Panc1 (cell line): ENCODE measurements at regions of chr22 and their contacts with region 1.

Region 1: GRCh38 chr22:29798801-29799680 is 31.9 kb downstream of the UQCR10 start:
- DNase-seq: no peak
- ATAC-seq: 0 out of 2 replicates have a peak, but pooled peaks have one; percentile 48
- H3K4me3 ChIP-seq: no peak overlapping the region
- H3K27ac ChIP-seq: no peak overlapping the region
- H3K4me1 ChIP-seq: no peaks in the 10 kb centered on the region
- H3K27me3 ChIP-seq: no peaks in the 10 kb centered on the region
- CTCF ChIP-seq: no peak

Region 2: GRCh38 chr22:29810216-29810615 is 11.2 kb after region 1 on chr22:
- CTCF ChIA-PET with region 1: no interaction called
- POLR2A ChIA-PET with region 1: no interaction called
- in situ Hi-C with region 1: no loop called
- intact Hi-C with region 1: no loop called
- DNase-seq: no peak
- ATAC-seq: no peak
- H3K4me3 ChIP-seq: no peak overlapping the region
- H3K27ac ChIP-seq: no peak overlapping the region
- H3K4me1 ChIP-seq: no peaks in the 10 kb centered on the region
- H3K27me3 ChIP-seq: no peaks in the 10 kb centered on the region
- CTCF ChIP-seq: no peak

Region 3: DNA sequence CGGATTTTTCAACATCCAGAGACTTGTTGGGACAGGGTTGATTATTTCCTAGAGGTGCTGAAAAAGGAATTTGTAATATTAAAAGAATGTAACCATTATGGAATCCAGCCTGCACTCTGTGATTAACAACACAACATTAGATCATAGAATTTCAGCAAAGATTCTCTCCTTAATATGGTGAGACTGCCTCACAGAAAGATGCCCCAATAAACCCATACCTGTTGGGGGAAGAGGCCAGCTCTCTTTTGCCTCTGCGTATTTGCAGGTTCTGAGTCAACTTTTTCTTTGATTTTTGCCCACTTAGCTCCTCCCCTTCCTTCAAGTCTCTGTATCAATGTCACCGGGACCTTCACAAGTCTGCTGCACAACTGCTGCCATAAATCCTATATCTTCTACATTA is 71.5 kb after region 1 on chr22:
- CTCF ChIA-PET with region 1: no interaction called
- POLR2A ChIA-PET with region 1: no interaction called
- in situ Hi-C with region 1: no loop called
- intact Hi-C with region 1: no loop called
- DNase-seq: no peak
- ATAC-seq: no peak
- H3K4me3 ChIP-seq: no peak overlapping the region
- H3K27ac ChIP-seq: no peak overlapping the region
- H3K4me1 ChIP-seq: no peaks in the 10 kb centered on the region
- H3K27me3 ChIP-seq: no peaks in the 10 kb centered on the region
- CTCF ChIP-seq: no peak

Region 4: GRCh38 chr22:29951791-29952413 is 152.9 kb after region 1 on chr22:
- CTCF ChIA-PET with region 1: no interaction called
- POLR2A ChIA-PET with region 1: interaction called, 14 read pairs
- in situ Hi-C with region 1: no loop called
- intact Hi-C with region 1: no loop called
- DNase-seq: no peak
- ATAC-seq: no peak
- H3K4me3 ChIP-seq: no peak overlapping the region
- H3K27ac ChIP-seq: no peak overlapping the region
- H3K4me1 ChIP-seq: peaks cover 10% of the 10 kb centered on the region
- H3K27me3 ChIP-seq: no peaks in the 10 kb centered on the region
- CTCF ChIP-seq: no peak

Region 5: GRCh38 chr22:30005213-30005857 is 206.3 kb after region 1 on chr22:
- CTCF ChIA-PET with region 1: no interaction called
- POLR2A ChIA-PET with region 1: no interaction called
- in situ Hi-C with region 1: no loop called
- intact Hi-C with region 1: loop called (anchors 10 kb)
- DNase-seq: peak; percentile 46
- ATAC-seq: peak; percentile 87
- H3K4me3 ChIP-seq: no peak overlapping the region
- H3K27ac ChIP-seq: no peak overlapping the region
- H3K4me1 ChIP-seq: no peaks in the 10 kb centered on the region
- H3K27me3 ChIP-seq: no peaks in the 10 kb centered on the region
- CTCF ChIP-seq: peak; percentile 90

Region 6: GRCh38 chr22:30054588-30055033 is 255.6 kb after region 1 on chr22:
- CTCF ChIA-PET with region 1: no interaction called
- POLR2A ChIA-PET with region 1: interaction called, 16 read pairs
- in situ Hi-C with region 1: no loop called
- intact Hi-C with region 1: no loop called
- DNase-seq: no peak
- ATAC-seq: no peak
- H3K4me3 ChIP-seq: no peak overlapping the region
- H3K27ac ChIP-seq: no peak overlapping the region
- H3K4me1 ChIP-seq: no peaks in the 10 kb centered on the region
- H3K27me3 ChIP-seq: no peaks in the 10 kb centered on the region
- CTCF ChIP-seq: no peak